IMR-90 (cell line): ENCODE measurements at regions of chrX and their contacts with region 1.

Region 1: GRCh38 chrX:43958529-43958928 is 14.7 kb downstream of the NDP start:
- DNase-seq: peak; percentile 83
- ATAC-seq: peak; percentile 98
- H3K4me3 ChIP-seq: no peak overlapping the region
- H3K27ac ChIP-seq: no peak overlapping the region
- H3K4me1 ChIP-seq: no peaks in the 10 kb centered on the region
- H3K27me3 ChIP-seq: peaks cover 7% of the 10 kb centered on the region
- CTCF ChIP-seq: peak; percentile 95
- POLR2A ChIP-seq: no peak; the same call in 1 of the 2 replicates
- RAD21 ChIP-seq: peak; percentile 91

Region 2: DNA sequence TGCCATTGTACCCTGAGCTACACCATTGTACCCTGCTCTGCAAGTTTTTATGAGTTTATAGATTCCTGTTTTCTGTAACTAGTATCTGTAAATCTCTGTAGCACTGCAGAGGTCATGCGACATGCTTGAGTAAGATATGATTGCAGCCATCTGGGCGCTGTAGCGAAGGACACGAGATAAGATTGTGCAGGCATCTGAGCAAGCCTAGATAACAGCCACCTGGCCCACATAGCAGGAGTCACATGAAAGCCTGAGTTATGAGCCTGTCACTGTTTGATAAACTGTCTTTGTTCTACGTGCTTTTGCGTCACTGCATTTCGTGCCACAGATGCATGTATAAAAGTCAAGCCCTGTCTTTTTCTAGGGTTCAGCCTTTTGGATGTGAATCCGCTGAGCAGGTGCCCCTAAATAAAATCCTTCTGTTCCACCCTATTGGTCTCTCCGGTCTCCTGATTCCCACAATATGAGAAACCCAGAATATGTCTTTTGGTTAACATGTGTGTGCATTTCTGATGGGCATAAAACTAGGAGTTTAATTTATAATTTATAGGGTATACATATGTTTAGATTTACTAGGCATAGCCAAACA is 630.1 kb before region 1 on chrX:
- CTCF ChIA-PET with region 1: no interaction called
- POLR2A ChIA-PET with region 1: no interaction called
- dilution Hi-C with region 1: no loop called
- in situ Hi-C with region 1: no loop called
- intact Hi-C with region 1: no loop called
- DNase-seq: no peak
- ATAC-seq: no peak
- H3K4me3 ChIP-seq: no peak overlapping the region
- H3K27ac ChIP-seq: no peak overlapping the region
- H3K4me1 ChIP-seq: no peaks in the 10 kb centered on the region
- H3K27me3 ChIP-seq: no peaks in the 10 kb centered on the region
- CTCF ChIP-seq: no peak
- POLR2A ChIP-seq: no peak
- RAD21 ChIP-seq: no peak

Region 3: GRCh38 chrX:44238206-44238605 is 279.7 kb after region 1 on chrX:
- CTCF ChIA-PET with region 1: interaction called, 8 read pairs
- POLR2A ChIA-PET with region 1: no interaction called
- dilution Hi-C with region 1: no loop called
- in situ Hi-C with region 1: loop called (anchors 5 kb)
- intact Hi-C with region 1: no loop called
- DNase-seq: no peak
- ATAC-seq: no peak
- H3K4me3 ChIP-seq: no peak overlapping the region
- H3K27ac ChIP-seq: no peak overlapping the region
- H3K4me1 ChIP-seq: no peaks in the 10 kb centered on the region
- H3K27me3 ChIP-seq: peaks cover 7% of the 10 kb centered on the region
- CTCF ChIP-seq: no peak
- POLR2A ChIP-seq: no peak
- RAD21 ChIP-seq: no peak

Region 4: DNA sequence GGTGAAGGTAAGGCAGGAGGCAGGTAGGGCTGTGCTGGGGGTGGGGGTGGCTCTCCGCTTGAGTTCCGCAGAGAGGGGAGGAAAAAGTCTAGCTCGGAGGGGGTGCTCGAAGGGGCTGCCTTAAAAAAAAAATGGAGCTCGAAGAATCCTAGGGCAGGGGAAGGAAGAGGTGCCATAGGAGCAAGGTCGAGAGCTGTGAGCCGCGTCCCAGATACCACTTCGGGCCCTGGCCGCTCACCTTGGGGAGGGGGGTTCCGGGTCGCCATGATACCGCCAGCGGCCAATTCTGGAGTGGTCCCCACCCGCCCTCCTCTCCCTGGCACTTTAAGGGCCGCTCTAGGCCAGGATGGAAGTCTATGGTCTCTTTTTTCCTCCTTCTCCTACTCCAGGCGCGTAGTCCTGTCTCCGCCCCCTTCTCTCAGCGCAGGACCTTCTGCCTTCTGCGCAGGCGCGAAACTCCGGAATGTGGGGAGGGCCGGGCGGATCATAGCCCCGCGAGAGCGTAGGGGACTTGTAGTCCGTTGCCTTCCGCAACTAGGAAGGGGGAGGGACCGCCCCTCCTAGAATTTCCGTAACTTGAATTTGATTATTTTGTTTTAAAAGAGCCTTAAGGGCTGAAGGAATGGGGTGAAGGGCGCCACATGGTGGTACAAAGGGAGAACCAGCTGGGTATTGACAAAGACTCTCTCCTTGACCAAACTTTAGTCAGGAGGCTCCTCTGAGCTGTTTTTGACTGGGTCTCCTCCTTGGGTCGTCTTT is 584.2 kb after region 1 on chrX and contains the start of gene FUNDC1:
- CTCF ChIA-PET with region 1: no interaction called
- POLR2A ChIA-PET with region 1: no interaction called
- dilution Hi-C with region 1: no loop called
- in situ Hi-C with region 1: no loop called
- intact Hi-C with region 1: loop called (anchors 5 kb)
- DNase-seq: peak; percentile 91
- ATAC-seq: peak; percentile 99
- H3K4me3 ChIP-seq: peak within 1 kb of the TSS; percentile 81
- H3K27ac ChIP-seq: peak within 1 kb of the TSS; percentile 85
- H3K4me1 ChIP-seq: no peaks in the 10 kb centered on the region
- H3K27me3 ChIP-seq: no peaks in the 10 kb centered on the region
- CTCF ChIP-seq: peak; percentile 40; the same call in 1 of the 2 replicates
- POLR2A ChIP-seq: peak; percentile 43; the same call in 1 of the 2 replicates
- RAD21 ChIP-seq: peak; percentile 27; the same call in 1 of the 2 replicates
- total RNA-seq, gene FUNDC1: 8.6 and 13.6 TPM in 2 replicates

Region 5: DNA sequence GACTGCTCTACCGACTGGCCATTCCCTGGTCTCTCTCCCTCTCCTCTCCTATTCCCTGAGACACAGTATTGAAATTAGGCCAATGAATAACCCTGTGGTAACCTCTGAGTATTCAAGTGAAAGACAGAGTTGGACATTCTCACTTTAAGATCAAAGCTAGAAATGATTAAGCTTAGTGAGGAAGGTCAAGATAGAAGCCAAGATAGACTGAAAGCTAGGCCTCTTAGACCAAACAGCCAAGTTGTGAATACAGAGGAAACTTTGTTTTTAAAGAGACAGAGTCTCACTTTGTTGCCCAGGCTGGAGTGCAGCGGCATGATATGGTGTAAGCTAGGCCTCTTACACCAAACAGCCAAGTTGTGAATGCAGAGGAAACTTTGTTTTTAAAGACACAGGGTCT is 979.1 kb after region 1 on chrX:
- CTCF ChIA-PET with region 1: no interaction called
- POLR2A ChIA-PET with region 1: no interaction called
- dilution Hi-C with region 1: no loop called
- in situ Hi-C with region 1: no loop called
- intact Hi-C with region 1: loop called (anchors 5 kb)
- DNase-seq: no peak
- ATAC-seq: no peak
- H3K4me3 ChIP-seq: no peak overlapping the region
- H3K27ac ChIP-seq: no peak overlapping the region
- H3K4me1 ChIP-seq: no peaks in the 10 kb centered on the region
- H3K27me3 ChIP-seq: no peaks in the 10 kb centered on the region
- CTCF ChIP-seq: no peak
- POLR2A ChIP-seq: no peak
- RAD21 ChIP-seq: no peak

Region 6: GRCh38 chrX:45186643-45187026 is 1228.1 kb after region 1 on chrX:
- CTCF ChIA-PET with region 1: no interaction called
- POLR2A ChIA-PET with region 1: no interaction called
- dilution Hi-C with region 1: no loop called
- in situ Hi-C with region 1: loop called (anchors 25 kb)
- intact Hi-C with region 1: loop called (anchors 1 kb)
- DNase-seq: no peak
- ATAC-seq: no peak; the same call in 1 of the 2 replicates
- H3K4me3 ChIP-seq: no peak overlapping the region
- H3K27ac ChIP-seq: no peak overlapping the region
- H3K4me1 ChIP-seq: no peaks in the 10 kb centered on the region
- H3K27me3 ChIP-seq: peaks cover 10% of the 10 kb centered on the region
- CTCF ChIP-seq: no peak
- POLR2A ChIP-seq: no peak
- RAD21 ChIP-seq: no peak